Psoas muscle (tissue), 8 donors: ENCODE measurements at regions of chr6 and their contacts with region 1.

Region 1: DNA sequence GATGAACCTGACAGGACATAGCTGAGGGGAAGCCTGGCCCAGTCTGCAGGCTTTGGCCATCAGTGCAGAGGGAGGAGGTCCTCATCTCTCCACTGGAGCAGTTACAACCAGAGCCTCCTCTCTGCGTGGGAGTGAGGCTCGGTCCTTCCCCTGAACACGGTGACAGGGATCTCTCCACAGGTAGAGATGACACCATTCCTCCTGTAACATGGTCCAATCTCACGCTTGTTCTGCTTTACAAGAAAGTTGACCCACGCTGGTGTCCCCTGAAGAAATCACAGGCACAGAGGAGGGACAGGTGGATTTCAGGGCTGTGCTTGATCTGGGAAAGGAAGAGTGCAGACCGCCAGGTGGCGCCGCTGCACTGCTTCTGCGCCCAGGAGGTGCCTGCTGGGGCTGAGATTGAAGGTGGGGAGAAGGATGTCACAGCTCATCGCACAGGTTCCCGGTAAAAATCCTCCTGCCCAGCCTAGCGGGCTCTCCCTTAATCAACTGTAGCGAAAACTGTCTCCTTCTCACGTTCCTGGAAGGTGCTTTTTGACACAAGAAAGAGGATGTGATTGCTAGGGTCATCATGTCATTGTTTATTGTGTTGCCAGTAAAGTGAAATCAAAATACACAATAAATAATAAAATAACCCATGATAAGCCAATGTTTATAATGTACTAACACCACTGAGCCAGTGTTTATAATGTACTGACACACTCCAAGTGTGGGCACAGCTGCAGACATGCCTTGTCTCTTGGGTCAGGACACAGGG is 20.4 kb downstream of the HLA-G start:
- DNase-seq: peak; percentile 78 to 87
- ATAC-seq: peak; percentile 91 to 99 (median 95)
- H3K4me3 ChIP-seq: no peak overlapping the region
- H3K27ac ChIP-seq: no peak overlapping the region
- H3K4me1 ChIP-seq: no peaks in the 10 kb centered on the region
- H3K27me3 ChIP-seq: peaks cover 2 to 54% (median 5%) of the 10 kb centered on the region in 3 donors
- CTCF ChIP-seq: peak; percentile 99

Region 2: GRCh38 chr6:30013291-30013922 is 165.4 kb after region 1 on chr6:
- intact Hi-C with region 1: loop called (anchors 1 to 2 kb)
- DNase-seq: no peak
- ATAC-seq: peak; percentile 57 to 83 (median 64)
- H3K4me3 ChIP-seq: no peak overlapping the region
- H3K27ac ChIP-seq: no peak overlapping the region
- H3K4me1 ChIP-seq: no peaks in the 10 kb centered on the region
- H3K27me3 ChIP-seq: peaks cover 2 to 12% (median 5%) of the 10 kb centered on the region in 3 donors
- CTCF ChIP-seq: peak; percentile 89

Region 3: DNA sequence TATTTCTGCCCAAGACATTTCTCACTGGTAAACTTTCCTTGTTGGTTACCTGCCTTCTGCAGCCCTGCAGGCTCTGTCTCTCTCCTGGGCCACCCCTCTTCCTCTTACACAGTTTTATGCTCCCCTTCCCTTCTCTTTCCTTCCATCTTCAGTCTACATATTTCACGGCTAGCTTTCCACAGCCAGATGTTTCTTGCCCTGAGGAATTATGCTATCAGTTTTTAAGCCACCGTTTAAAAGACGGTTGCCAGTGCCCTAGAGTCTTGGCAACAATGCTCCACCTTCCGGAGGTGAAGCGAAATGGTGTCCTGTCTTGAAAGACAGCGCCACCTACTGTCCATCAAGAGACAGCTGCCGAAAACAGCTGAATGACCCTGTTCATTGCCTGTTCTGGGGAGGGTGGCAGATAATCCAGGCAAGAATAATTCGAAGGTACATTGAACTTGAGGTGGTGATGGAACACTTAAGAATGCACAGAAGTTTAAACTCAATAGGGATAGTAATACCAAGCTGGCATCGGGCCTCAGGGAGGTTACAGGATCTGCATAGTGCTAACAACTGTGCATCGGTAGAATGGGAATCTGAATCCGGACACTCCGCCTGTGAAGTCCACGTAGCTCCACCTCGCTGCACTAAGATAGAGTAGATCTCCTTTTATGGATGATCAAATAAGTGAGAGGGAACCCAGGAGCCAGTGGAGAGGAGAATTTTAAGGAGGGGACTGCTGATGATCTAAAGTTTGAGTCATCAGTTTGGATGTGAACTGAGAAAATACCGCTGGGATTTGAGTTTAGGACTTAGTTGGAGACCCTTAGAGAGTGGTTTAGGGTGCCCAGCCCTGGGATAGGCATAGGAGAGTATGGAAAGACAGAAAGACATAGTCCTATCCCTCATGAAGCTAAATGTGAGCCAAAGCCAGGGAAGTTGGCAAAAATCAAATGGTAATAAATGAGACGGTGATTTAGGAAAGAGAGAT is 283.1 kb after region 1 on chr6:
- intact Hi-C with region 1: loop called in 1 of 2 experiments (anchors 10 kb)
- DNase-seq: peak; percentile 30 to 58
- ATAC-seq: peak; percentile 89 to 97 (median 92)
- H3K4me3 ChIP-seq: no peak overlapping the region
- H3K27ac ChIP-seq: no peak overlapping the region
- H3K4me1 ChIP-seq: peaks cover 5% of the 10 kb centered on the region
- H3K27me3 ChIP-seq: peaks cover 4 to 62% (median 12%) of the 10 kb centered on the region in 3 donors
- CTCF ChIP-seq: peak; percentile 97